Activated B cell treated with CpG ODN at 0.5 μM for 24 hours (primary cell): ENCODE measurements at regions of chr7 and their contacts with region 1.

Region 1: GRCh38 chr7:47991741-47992311 is 12.4 kb upstream of the HUS1 start:
- DNase-seq: peak; percentile 78
- ATAC-seq: peak; percentile 98
- H3K4me3 Mint-ChIP-seq: peak overlapping the region; percentile 97
- H3K27ac Mint-ChIP-seq: peak overlapping the region; percentile 82
- H3K4me1 Mint-ChIP-seq: peaks cover 14% of the 10 kb centered on the region
- H3K27me3 Mint-ChIP-seq: no peaks in the 10 kb centered on the region
- CTCF ChIP-seq: peak; percentile 40

Region 2: DNA sequence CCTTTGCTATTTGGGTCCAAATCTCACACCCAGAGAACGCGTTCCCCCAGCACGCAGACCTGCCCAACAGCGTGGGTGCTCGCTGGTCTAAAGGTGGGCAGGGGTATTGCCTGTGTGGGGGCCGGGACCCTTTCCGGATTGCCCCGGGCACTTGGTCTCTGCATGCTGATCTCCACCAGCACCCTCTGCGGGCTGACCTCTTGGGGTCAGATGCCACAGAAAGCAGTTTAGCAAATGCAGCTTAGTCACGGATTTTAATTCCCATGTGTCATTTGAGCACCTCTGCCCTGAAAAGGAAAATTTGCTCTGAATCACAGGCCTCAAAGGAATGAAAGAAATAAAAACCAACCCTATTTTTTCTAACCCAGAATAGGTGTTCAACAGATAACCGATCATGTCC is 90.3 kb before region 1 on chr7:
- CTCF ChIA-PET with region 1: no interaction called
- POLR2A ChIA-PET with region 1: no interaction called
- intact Hi-C with region 1: no loop called
- DNase-seq: no peak
- ATAC-seq: no peak
- H3K4me3 Mint-ChIP-seq: no peak overlapping the region
- H3K27ac Mint-ChIP-seq: no peak overlapping the region
- H3K4me1 Mint-ChIP-seq: no peaks in the 10 kb centered on the region
- H3K27me3 Mint-ChIP-seq: peaks cover under 1% of the 10 kb centered on the region
- CTCF ChIP-seq: no peak

Region 3: DNA sequence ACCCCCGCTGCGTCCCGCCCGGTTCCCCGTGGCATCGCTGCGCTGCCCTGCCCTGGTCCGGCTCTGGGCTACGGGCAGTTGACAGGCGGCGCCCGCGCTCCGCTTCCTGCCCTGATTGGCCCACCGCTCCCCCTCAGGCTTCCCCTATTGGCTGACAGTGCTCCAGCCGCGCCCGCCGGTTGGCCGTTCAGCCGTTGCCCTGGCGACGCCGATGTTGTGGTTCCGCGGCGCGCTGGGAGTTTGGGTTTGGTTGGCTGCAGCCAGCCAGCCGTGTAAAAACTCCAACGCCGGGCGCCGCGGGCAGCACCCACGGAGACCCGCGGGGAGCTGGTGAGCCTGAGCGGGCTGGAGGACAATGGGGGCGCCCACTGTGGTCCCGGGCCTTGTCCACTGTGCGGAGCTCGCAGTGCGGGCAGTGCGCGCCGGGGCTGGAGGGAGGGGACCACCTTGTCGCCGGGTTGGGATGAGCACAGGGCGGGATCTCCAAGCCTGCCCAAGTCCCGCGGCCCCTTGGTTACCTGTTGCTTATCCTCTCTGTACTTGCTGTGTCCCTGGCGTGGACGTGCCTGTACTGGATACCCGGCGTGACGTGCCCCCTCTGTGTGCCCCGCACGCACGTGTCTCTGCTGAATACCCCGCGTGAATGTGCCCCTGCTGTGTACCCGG is 43.6 kb after region 1 on chr7 and contains the start of gene C7orf57:
- CTCF ChIA-PET with region 1: interaction called, 4 read pairs
- POLR2A ChIA-PET with region 1: no interaction called
- intact Hi-C with region 1: loop called (anchors 2 kb)
- DNase-seq: peak; percentile 75
- ATAC-seq: peak; percentile 97
- H3K4me3 Mint-ChIP-seq: peak within 1 kb of the TSS; percentile 73
- H3K27ac Mint-ChIP-seq: no peak within 1 kb of the TSS
- H3K4me1 Mint-ChIP-seq: peaks cover 13% of the 10 kb centered on the region
- H3K27me3 Mint-ChIP-seq: peaks cover 25% of the 10 kb centered on the region
- CTCF ChIP-seq: no peak
- total RNA-seq, gene C7orf57: not detected in 2 replicates